AG04449 (cell line): ENCODE measurements at regions of chr19 and their contacts with region 1.

Region 1: DNA sequence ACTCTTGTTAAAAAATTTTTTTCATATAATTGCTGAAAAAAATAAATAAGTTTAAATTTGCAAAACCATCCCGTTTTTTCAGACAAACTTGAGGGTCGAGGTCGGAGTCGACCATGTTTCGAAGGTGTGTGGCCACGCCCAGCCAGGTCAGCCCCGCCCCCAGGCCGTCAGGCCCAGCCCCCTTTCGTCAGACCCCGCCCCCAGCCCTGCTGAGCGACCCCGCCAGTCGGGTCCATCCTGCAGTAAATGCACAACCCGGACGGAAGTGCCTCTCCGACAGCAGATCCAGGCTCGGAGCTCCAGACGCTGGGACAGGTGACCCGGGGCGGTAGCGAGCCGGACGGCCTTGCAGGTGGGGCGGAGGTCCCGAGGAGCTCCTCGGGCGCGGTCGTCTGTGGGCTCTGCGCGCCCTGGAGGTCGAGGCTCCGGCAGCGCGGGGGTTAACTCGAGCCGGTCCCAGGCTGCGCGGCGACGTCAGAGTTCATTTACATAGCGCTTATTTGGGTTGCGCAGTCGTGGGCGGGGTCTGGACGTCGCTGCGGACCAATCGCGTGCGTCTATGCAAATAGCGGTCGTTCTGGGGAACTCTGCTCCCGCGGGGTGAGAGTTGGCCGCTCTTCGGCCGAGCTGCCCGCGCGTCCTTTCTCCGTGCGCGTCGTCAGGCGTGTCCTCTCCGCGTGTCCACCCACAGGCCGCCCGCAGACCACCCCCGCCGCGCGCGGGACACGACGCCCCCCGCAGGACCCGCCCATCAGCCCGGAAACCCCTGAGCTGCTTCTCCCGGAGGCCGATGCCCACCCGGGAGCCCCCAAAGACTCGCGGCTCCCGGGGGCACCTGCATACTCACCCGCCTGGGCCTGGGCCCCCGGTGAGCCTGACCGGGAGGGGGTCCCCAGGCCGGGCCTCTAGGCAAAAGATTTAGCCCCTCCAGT is at the start of gene OCEL1:
- DNase-seq: peak; percentile 74
- H3K4me3 ChIP-seq: peak within 1 kb of the TSS; percentile 91
- CTCF ChIP-seq: no peak

Region 2: DNA sequence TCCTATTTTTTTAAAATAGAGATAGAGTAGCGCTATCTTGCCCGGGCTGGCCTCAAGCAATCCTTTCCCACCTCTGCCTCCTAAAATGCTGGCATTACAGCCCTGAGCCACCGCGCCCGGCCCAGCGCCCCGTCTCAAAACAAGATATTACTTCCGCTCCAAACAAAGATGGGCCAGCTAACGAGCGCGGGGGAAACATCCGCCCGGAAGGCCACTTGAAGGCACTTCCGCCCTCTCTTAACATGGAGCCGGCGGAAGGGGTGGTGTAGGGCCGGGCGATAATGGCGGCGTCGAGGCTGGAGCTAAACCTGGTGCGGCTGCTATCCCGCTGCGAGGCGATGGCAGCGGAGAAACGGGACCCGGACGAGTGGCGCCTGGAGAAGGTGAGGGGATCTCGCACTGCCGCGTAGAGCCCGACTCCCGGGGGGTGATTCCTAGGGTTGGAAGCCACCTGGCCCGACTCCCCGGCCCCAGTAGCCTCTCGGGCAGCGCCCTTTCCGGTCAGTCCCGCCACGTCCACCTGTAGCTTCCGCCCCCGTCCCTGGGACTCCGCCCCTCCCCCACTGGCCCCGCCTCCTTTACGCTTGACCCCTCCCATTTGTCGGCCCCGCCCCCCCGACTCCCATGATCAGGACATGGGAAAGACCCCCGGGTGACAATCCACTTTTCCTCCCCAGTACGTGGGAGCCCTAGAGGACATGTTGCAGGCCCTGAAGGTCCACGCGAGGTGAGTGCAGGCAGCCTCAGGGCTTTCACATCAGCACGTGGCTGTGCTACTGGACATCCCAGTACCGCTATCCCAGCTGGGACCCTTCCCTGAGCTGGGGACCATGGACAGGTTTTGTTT is 10.9 kb before region 1 on chr19 and contains the start of gene USE1:
- CTCF ChIA-PET with region 1: interaction called, 7 read pairs
- POLR2A ChIA-PET with region 1: interaction called, 17 read pairs
- DNase-seq: peak; percentile 51
- H3K4me3 ChIP-seq: peak within 1 kb of the TSS; percentile 77
- CTCF ChIP-seq: no peak

Region 3: DNA sequence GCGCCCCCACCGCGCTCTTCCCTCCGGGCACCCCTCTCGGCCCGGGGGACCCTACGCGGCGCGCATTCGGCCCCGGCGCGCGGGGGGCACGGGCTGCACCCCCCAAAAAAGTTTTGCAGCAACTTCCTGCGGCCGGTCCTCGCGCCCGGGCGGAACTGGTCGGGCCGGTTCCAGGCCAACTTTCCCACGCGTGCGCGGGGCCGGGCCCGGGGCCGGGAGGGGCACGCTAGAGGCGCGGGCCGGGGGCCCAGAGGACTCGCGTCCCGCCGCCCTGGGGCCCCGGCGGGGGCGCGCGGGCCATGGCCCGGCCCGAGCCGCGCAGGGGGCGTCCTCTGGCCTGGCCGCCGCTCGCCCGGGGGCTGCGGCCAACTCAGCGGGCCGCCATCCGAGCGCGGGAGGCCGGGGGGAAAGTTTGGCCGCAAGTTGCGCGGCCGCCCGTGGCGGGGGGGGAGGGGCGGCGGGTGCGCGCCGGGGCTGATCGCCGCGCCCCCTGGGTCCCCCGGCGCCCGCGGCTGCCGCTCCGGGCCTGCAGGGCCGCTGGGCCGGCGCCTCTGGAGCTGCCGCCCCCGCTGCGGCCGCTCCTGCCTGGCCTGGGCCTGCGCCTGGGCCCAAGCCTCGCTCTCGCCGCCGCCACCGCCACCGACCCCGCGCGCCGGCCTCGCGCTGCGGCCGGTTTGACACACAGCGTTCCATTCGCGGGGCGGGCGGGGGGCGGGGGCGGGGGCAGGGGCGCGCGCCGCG is 19.1 kb after region 1 on chr19 and contains the start of gene NR2F6:
- CTCF ChIA-PET with region 1: interaction called, 4 read pairs
- POLR2A ChIA-PET with region 1: interaction called, 11 read pairs
- DNase-seq: no peak
- H3K4me3 ChIP-seq: peak within 1 kb of the TSS; percentile 82
- CTCF ChIP-seq: no peak

Region 4: DNA sequence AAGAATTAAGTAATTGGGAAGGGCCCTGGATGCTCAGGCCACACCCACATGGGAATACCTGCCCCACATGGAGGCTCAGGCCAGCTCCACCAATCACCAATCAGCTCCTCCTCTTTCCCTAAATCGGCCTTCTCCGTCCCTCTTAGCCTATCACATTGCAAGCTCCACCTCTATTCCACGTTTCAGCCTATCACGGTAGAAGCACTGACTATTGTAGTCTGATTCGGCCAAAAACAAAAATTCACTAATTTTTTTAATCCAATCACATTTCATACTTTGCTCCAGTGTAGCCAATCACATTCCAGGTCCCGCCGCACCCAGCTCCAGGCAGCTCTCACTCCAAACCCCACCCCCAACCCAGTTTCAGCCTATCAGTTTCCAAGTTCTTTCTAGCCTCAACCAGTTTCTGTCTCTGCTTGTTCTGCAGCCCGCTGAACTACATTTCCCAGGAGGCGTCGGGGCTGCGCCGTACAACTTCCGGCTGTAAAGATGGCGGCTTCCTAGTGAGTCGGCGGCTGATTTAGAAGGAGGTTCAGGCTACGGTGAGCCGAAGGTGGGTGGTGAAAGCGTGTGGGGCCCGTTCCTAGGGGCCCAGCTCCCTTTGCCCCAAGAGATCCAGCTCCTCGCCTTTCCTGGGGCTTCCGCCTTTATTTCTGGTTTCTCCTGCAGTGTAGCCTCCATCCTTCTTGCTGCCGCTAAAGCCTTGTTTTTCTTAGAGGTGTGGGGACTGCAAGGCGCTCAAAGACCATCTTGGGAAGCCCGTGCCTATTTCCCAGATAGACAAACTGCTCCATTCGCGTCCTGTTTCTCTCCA is 40.9 kb after region 1 on chr19 and contains the start of gene BABAM1:
- CTCF ChIA-PET with region 1: no interaction called
- POLR2A ChIA-PET with region 1: no interaction called
- DNase-seq: peak; percentile 99
- H3K4me3 ChIP-seq: peak within 1 kb of the TSS; percentile 98
- CTCF ChIP-seq: no peak

Region 5: GRCh38 chr19:17358395-17358794 is 132.1 kb after region 1 on chr19:
- CTCF ChIA-PET with region 1: no interaction called
- POLR2A ChIA-PET with region 1: no interaction called
- DNase-seq: no peak
- H3K4me3 ChIP-seq: no peak overlapping the region
- CTCF ChIP-seq: no peak